ENCODE measurements at regions of chr18 and their contacts with region 1.

Region 1: GRCh38 chr18:63329431-63330145 is 10.0 kb upstream of the BCL2 start:
- DNase-seq: no peak
- H3K4me3 ChIP-seq: no peak overlapping the region
- H3K27ac ChIP-seq: no peak overlapping the region
- H3K4me1 ChIP-seq: no peaks in the 10 kb centered on the region
- H3K27me3 ChIP-seq: no peaks in the 10 kb centered on the region
- CTCF ChIP-seq: no peak
- EP300 ChIP-seq: no peak
- POLR2A ChIP-seq: no peak

Region 2: GRCh38 chr18:63126114-63127069 is 203.2 kb before region 1 on chr18:
- intact Hi-C with region 1: loop called (anchors 5 kb)
- DNase-seq: no peak
- H3K4me3 ChIP-seq: no peak overlapping the region
- H3K27ac ChIP-seq: no peak overlapping the region
- H3K4me1 ChIP-seq: peaks cover 4 to 15% (median 9%) of the 10 kb centered on the region in 4 donors
- H3K27me3 ChIP-seq: no peaks in the 10 kb centered on the region
- CTCF ChIP-seq: no peak
- EP300 ChIP-seq: no peak
- POLR2A ChIP-seq: no peak

Region 3: GRCh38 chr18:63253428-63254372 is 75.9 kb before region 1 on chr18:
- intact Hi-C with region 1: no loop called
- DNase-seq: peak in 1 of 2 donors; percentile 42
- H3K4me3 ChIP-seq: no peak overlapping the region
- H3K27ac ChIP-seq: peak overlapping the region in 3 of 5 donors; percentile 4 to 48 (median 33)
- H3K4me1 ChIP-seq: peaks cover 0 to 35% (median 15%) of the 10 kb centered on the region in 4 donors
- H3K27me3 ChIP-seq: no peaks in the 10 kb centered on the region
- CTCF ChIP-seq: no peak
- EP300 ChIP-seq: no peak
- POLR2A ChIP-seq: no peak

Region 4: DNA sequence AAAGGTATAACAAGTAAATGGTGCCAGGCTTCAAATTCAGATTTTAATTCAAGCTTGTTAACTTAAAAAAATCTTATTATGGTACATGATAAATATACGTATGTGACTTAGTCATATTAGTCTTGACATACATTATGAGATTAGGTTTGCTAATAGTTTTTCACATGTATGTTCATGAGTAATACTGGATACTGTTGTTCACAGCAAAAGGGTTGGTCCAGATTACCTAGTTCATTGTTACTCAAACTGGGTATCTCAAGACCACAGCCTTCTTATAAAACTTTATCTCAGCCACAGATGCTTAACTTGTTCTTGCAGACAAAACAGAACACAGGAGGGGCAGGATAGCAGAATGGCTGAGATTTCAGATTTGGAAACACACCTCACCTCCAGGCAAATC is 65.9 kb after region 1 on chr18:
- intact Hi-C with region 1: no loop called
- DNase-seq: no peak
- H3K4me3 ChIP-seq: no peak overlapping the region
- H3K27ac ChIP-seq: no peak overlapping the region
- H3K4me1 ChIP-seq: no peaks in the 10 kb centered on the region
- H3K27me3 ChIP-seq: no peaks in the 10 kb centered on the region
- CTCF ChIP-seq: no peak
- EP300 ChIP-seq: no peak
- POLR2A ChIP-seq: no peak

Region 5: GRCh38 chr18:63619661-63620060 is 290.1 kb after region 1 on chr18:
- intact Hi-C with region 1: no loop called
- DNase-seq: no peak
- H3K4me3 ChIP-seq: no peak overlapping the region
- H3K27ac ChIP-seq: no peak overlapping the region
- H3K4me1 ChIP-seq: no peaks in the 10 kb centered on the region
- H3K27me3 ChIP-seq: no peaks in the 10 kb centered on the region
- CTCF ChIP-seq: no peak
- EP300 ChIP-seq: no peak
- POLR2A ChIP-seq: no peak